Psoas muscle (tissue), 8 donors: ENCODE measurements at regions of chr7 and their contacts with region 1.

Region 1: DNA sequence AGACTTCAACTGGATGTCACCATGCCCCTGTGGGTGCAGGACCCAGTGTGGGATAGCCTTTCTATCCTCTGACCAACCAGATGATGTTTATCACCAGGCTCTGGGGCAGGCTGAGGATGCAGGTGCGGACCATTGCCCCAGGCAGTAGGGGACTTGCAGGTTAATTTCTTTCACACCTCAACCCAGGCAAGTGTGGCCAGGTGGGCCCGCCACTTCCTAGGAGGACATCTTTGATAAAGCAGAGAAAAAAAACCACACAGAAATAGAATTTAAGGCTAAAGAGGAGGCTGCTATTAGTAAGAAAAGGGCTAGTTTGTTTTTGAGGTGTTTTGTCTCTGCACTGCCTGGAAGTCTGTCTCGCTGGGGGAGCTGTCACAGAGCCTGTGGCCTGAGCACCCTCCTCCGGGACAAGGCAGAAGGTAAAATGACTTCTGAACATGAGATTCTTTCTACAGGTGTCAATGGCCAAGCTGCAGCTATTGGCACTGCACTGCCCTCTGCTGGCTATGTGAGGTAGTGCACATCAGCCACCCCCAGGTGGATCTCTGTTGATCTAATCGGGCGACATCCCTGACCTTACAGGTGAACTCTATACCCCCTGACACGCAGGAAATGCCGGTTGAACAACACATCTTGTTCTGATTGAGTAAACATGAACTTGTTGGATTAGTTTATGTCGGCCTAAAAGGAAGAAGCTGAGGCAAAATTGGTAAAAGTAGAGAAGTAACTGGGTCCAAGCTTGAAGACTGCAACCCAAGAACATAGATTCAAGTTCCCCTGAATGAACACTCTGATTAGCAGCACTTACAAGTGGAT is 21.0 kb downstream of the UPP1 start:
- DNase-seq: peak; percentile 67 to 83
- ATAC-seq: peak; percentile 80 to 94 (median 86)
- H3K4me3 ChIP-seq: no peak overlapping the region
- H3K27ac ChIP-seq: no peak overlapping the region
- H3K4me1 ChIP-seq: no peaks in the 10 kb centered on the region
- H3K27me3 ChIP-seq: no peaks in the 10 kb centered on the region
- CTCF ChIP-seq: peak; percentile 100

Region 2: DNA sequence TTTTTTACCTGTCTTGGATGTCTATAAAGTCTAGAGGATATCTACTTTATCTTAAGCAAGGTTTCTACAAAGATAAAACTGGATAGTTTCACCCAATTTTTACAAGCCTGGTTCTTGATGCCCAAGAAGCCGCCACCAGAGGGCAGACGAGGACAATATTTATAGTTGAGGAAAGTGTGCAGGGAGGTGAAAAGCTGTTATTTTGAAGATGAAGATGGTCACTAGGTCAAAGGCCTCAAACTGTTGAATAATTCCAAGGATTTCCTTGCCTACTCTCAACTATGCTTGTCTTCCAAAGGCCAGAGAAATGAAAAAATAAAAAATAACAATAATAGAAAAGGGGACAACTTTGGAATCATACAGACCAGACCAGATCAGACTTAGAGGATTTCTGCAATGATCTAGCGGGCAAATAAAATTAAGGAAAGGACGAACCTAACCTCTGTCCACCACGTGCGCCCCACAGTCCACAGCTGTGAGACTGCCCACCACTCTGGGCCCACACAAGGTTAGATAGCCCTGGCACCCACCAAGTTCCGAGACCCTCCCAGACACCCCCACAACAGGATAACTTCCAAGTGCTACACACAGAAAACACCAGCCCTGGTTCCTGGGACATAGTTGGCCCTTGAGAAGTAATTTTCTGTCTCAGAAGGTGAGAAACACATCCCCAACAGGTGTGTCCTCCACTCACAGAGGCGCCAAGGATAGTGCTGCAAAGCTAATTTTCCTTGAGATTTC is 164.6 kb before region 1 on chr7:
- intact Hi-C with region 1: loop called (anchors 1 to 5 kb)
- DNase-seq: peak; percentile 79 to 83
- ATAC-seq: peak in 2 of 4 donors; percentile 42 to 75
- H3K4me3 ChIP-seq: no peak overlapping the region
- H3K27ac ChIP-seq: no peak overlapping the region
- H3K4me1 ChIP-seq: no peaks in the 10 kb centered on the region
- H3K27me3 ChIP-seq: no peaks in the 10 kb centered on the region
- CTCF ChIP-seq: peak; percentile 75

Region 3: GRCh38 chr7:47991741-47992311 is 118.2 kb before region 1 on chr7:
- intact Hi-C with region 1: loop called (anchors 1 to 5 kb)
- DNase-seq: peak; percentile 85 to 91
- ATAC-seq: peak; percentile 77 to 97 (median 88)
- H3K4me3 ChIP-seq: peak overlapping the region; percentile 61
- H3K27ac ChIP-seq: no peak overlapping the region
- H3K4me1 ChIP-seq: no peaks in the 10 kb centered on the region
- H3K27me3 ChIP-seq: peaks cover 0 to 4% (median 0%) of the 10 kb centered on the region in 3 donors
- CTCF ChIP-seq: peak; percentile 48

Region 4: GRCh38 chr7:48035301-48035966 is 74.6 kb before region 1 on chr7 and contains the start of gene C7orf57:
- intact Hi-C with region 1: loop called in 1 of 2 experiments (anchors 5 kb)
- DNase-seq: peak; percentile 92 to 95
- ATAC-seq: peak; percentile 100
- H3K4me3 ChIP-seq: peak within 1 kb of the TSS; percentile 74
- H3K27ac ChIP-seq: no peak within 1 kb of the TSS
- H3K4me1 ChIP-seq: peaks cover 11% of the 10 kb centered on the region
- H3K27me3 ChIP-seq: peaks cover 2 to 31% (median 8%) of the 10 kb centered on the region in 3 donors
- CTCF ChIP-seq: peak; percentile 13
- total RNA-seq, gene C7orf57: not detected

Region 5: DNA sequence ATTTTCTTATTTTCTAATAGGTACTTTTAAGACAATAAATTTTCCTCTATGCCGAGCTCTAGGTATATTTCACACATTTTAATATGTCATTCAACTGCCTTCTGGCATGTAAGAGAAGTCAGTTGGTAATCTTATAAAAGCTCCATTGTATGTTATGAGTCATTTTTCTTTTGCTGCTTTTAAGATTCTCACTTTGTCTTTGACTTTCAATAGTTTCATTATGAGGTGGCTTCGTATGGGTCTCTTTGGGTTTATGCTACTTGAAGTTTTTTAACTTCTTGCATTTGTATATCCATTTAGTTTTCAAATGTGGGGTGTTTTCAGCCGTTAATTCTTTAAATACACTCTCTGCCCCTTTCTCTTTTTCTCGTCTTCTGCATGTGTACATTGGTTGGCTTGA is 141.7 kb after region 1 on chr7:
- intact Hi-C with region 1: no loop called
- DNase-seq: no peak
- ATAC-seq: no peak
- H3K4me3 ChIP-seq: no peak overlapping the region
- H3K27ac ChIP-seq: no peak overlapping the region
- H3K4me1 ChIP-seq: no peaks in the 10 kb centered on the region
- H3K27me3 ChIP-seq: no peaks in the 10 kb centered on the region
- CTCF ChIP-seq: no peak